Common myeloid progenitor, CD34-positive (primary cell): ENCODE measurements at regions of chr3 and their contacts with region 1.

Region 1: DNA sequence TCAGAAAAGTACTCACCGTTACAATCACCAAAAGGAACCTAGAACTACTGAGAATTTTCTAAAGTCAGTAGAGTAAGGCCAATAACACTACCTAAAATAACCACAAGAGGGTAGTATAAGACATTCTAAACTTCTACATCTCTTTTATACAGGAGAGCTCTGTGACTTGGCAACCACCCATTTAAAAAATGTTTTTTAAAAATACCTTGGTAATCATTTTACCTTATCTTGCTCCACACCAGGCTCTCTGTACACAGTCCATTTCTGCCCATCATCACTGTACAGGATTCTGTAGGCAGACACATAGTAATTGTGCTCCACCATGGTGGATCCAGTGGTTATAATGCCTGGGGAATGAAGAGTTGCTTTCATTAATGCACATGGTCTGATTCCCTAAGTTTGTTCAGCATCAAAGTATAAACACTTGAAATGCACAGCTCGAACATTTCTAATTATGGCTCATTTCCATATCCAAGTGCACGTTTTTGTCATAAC is 54.5 kb downstream of the ST3GAL6 start:
- DNase-seq: peak; percentile 45 to 73 (median 63)
- H3K4me3 ChIP-seq: no peak overlapping the region
- H3K27ac ChIP-seq: no peak overlapping the region
- H3K4me1 ChIP-seq: no peaks in the 10 kb centered on the region
- H3K27me3 ChIP-seq: no peaks in the 10 kb centered on the region

Region 2: GRCh38 chr3:98593046-98593936 is 224.3 kb before region 1 on chr3 and contains the start of gene CPOX:
- CTCF ChIA-PET with region 1: interaction called, 293 read pairs
- POLR2A ChIA-PET with region 1: no interaction called
- DNase-seq: peak; percentile 74 to 89 (median 83)
- H3K4me3 ChIP-seq: peak within 1 kb of the TSS; percentile 72 to 90 (median 82)
- H3K27ac ChIP-seq: peak within 1 kb of the TSS; percentile 17 to 67
- H3K4me1 ChIP-seq: peaks cover 5 to 49% (median 17%) of the 10 kb centered on the region in 4 experiments
- H3K27me3 ChIP-seq: no peaks in the 10 kb centered on the region

Region 3: DNA sequence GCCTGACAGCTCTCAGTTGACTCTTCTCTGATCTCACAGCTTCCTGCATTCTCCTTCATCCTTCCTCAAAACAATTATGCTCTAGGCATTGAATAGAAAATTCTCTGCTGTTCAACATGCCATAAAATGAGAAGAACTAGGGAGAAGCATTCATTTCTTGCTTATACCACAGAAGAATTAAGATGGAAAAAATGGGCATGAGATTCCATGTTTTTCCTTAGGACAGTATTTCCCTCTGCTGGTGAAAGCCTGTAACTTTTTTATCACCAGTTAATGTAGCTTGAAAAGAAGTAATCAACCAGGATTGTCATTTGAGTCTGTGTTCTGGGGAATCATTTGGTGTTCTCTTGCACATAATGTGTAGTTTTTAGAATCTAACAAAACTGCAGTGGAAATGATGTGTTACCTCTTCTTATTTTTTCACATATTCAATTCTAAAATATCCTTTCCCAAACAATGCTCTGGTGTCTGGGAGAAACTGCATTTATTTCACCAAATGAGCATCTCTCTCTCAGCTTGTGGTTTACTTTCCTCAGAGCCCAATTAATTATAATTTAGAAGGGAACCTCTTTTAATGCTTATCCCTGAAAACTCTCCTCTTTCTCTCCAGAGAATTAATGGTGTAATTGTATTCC is 176.7 kb after region 1 on chr3:
- CTCF ChIA-PET with region 1: interaction called, 30 read pairs
- POLR2A ChIA-PET with region 1: no interaction called
- DNase-seq: peak in 2 of 3 donors; percentile 7 to 18
- H3K4me3 ChIP-seq: no peak overlapping the region
- H3K27ac ChIP-seq: no peak overlapping the region
- H3K4me1 ChIP-seq: no peaks in the 10 kb centered on the region
- H3K27me3 ChIP-seq: peaks cover 0 to 3% (median 0%) of the 10 kb centered on the region in 5 experiments

Region 4: GRCh38 chr3:99172736-99173657 is 355.4 kb after region 1 on chr3:
- CTCF ChIA-PET with region 1: interaction called, 26 read pairs
- POLR2A ChIA-PET with region 1: no interaction called
- DNase-seq: peak; percentile 44 to 73 (median 64)
- H3K4me3 ChIP-seq: no peak overlapping the region
- H3K27ac ChIP-seq: no peak overlapping the region
- H3K4me1 ChIP-seq: peaks cover 0 to 4% (median 0%) of the 10 kb centered on the region in 4 experiments
- H3K27me3 ChIP-seq: no peaks in the 10 kb centered on the region